CD4-positive, alpha-beta memory T cell (primary cell): ENCODE measurements at regions of chr5 and their contacts with region 1.

Region 1: DNA sequence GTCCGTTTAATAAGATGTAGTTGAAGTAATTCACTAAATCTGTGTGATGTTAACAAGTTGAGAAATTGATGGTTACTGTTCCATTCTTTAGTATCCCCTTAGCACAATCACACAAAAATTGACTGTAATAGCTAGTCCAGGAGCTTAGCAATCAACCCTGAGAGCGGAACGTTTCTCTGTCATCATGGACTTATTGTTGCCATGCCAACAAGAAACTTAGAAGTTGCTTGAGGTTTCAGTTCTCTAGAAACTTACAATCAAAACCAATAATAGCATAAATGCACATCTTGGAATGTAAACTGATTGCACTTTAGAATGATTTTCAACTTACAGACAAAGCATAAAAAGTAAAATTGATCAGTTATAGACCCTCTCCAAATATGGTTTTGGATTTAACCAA is 125.4 kb upstream of the ANKH start:
- DNase-seq: no peak
- H3K4me3 ChIP-seq: no peak overlapping the region
- H3K4me3 Mint-ChIP-seq: no peak overlapping the region
- H3K27ac ChIP-seq: no peak overlapping the region
- H3K27ac Mint-ChIP-seq: no peak overlapping the region
- H3K4me1 ChIP-seq: peaks cover 7% of the 10 kb centered on the region
- H3K4me1 Mint-ChIP-seq: peaks cover 5 to 15% (median 9%) of the 10 kb centered on the region in 4 donors
- H3K27me3 ChIP-seq: no peaks in the 10 kb centered on the region
- H3K27me3 Mint-ChIP-seq: peaks cover 3 to 7% of the 10 kb centered on the region in 2 donors

Region 2: GRCh38 chr5:14595189-14595588 is 401.8 kb before region 1 on chr5:
- CTCF ChIA-PET with region 1: no interaction called
- POLR2A ChIA-PET with region 1: no interaction called
- intact Hi-C with region 1: loop called (anchors 10 kb)
- DNase-seq: peak; percentile 40 to 56 (median 49)
- H3K4me3 ChIP-seq: peak overlapping the region; percentile 16 to 34
- H3K4me3 Mint-ChIP-seq: peak overlapping the region; percentile 78 to 88 (median 84)
- H3K27ac ChIP-seq: peak overlapping the region; percentile 55
- H3K27ac Mint-ChIP-seq: peak overlapping the region; percentile 84 to 98 (median 96)
- H3K4me1 ChIP-seq: peaks cover 86% of the 10 kb centered on the region
- H3K4me1 Mint-ChIP-seq: peaks cover 68 to 90% (median 79%) of the 10 kb centered on the region in 4 donors
- H3K27me3 ChIP-seq: no peaks in the 10 kb centered on the region
- H3K27me3 Mint-ChIP-seq: no peaks in the 10 kb centered on the region

Region 3: DNA sequence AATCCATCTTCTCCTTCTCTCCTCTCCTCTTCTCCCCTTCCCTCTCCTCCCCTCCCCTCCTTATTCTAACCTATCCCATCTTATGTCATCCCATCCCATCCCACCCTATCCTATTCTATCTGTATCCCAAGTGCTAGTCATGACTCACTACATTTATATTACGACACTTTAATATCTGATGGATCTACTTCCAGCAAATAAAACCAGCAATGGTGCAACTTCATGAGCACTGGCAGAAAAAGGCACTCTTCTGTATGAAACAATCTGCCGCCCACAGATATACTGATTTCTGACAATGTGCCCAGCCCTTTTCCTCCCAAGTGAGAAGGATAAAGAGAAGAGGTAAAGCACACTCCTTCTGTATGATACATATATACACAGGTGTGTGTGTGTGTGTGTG is 38.8 kb before region 1 on chr5:
- CTCF ChIA-PET with region 1: interaction called, 76 read pairs
- POLR2A ChIA-PET with region 1: no interaction called
- intact Hi-C with region 1: no loop called
- DNase-seq: no peak
- H3K4me3 ChIP-seq: no peak overlapping the region
- H3K4me3 Mint-ChIP-seq: no peak overlapping the region
- H3K27ac ChIP-seq: no peak overlapping the region
- H3K27ac Mint-ChIP-seq: no peak overlapping the region
- H3K4me1 ChIP-seq: no peaks in the 10 kb centered on the region
- H3K4me1 Mint-ChIP-seq: peaks cover 0 to 2% (median 0%) of the 10 kb centered on the region in 4 donors
- H3K27me3 ChIP-seq: no peaks in the 10 kb centered on the region
- H3K27me3 Mint-ChIP-seq: no peaks in the 10 kb centered on the region

Region 4: GRCh38 chr5:14983666-14984441 is 13.1 kb before region 1 on chr5:
- CTCF ChIA-PET with region 1: interaction called, 14 read pairs
- POLR2A ChIA-PET with region 1: interaction called, 4 read pairs
- intact Hi-C with region 1: no loop called
- DNase-seq: peak in 3 of 5 donors; percentile 8 to 28 (median 23)
- H3K4me3 ChIP-seq: no peak overlapping the region
- H3K4me3 Mint-ChIP-seq: peak overlapping the region in 2 of 8 donors; percentile 27 to 30
- H3K27ac ChIP-seq: no peak overlapping the region
- H3K27ac Mint-ChIP-seq: peak overlapping the region in 4 of 7 donors; percentile 16 to 45 (median 28)
- H3K4me1 ChIP-seq: peaks cover 21% of the 10 kb centered on the region
- H3K4me1 Mint-ChIP-seq: peaks cover 16 to 22% (median 20%) of the 10 kb centered on the region in 4 donors
- H3K27me3 ChIP-seq: no peaks in the 10 kb centered on the region
- H3K27me3 Mint-ChIP-seq: peaks cover 0 to 1% of the 10 kb centered on the region in 2 donors

Region 5: DNA sequence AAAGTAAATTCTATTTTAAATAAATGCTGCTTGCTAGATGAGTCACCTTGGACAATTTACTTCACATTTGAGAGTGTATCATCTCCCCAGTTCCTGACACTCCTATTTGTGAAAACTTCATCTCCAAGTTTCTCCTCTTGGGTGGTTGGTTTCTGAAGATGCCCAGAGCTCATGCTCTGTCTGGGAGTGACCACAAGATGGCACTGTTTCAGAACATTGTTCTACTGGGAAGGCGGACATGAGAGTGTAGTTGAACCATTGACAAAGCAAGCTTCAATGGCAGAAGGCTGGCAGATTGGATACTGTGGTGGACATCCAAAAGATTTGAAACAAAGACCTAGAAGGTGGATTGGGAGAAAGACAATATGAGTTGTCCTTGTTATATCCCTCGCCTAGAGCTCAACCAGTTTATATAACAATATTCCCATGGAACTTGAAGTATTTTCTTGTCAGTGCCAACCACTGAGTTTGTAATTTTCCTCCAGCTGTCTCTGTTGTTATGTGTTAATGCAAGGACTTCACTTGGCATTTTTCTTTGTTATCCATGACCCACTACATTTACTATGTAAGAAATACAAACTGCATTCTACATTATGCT is 108.9 kb after region 1 on chr5:
- CTCF ChIA-PET with region 1: no interaction called
- POLR2A ChIA-PET with region 1: no interaction called
- intact Hi-C with region 1: no loop called
- DNase-seq: peak in 3 of 5 donors; percentile 3 to 11 (median 4)
- H3K4me3 ChIP-seq: no peak overlapping the region
- H3K4me3 Mint-ChIP-seq: no peak overlapping the region
- H3K27ac ChIP-seq: no peak overlapping the region
- H3K27ac Mint-ChIP-seq: no peak overlapping the region
- H3K4me1 ChIP-seq: no peaks in the 10 kb centered on the region
- H3K4me1 Mint-ChIP-seq: peaks cover 1 to 6% (median 3%) of the 10 kb centered on the region in 4 donors
- H3K27me3 ChIP-seq: no peaks in the 10 kb centered on the region
- H3K27me3 Mint-ChIP-seq: peaks cover 0 to 2% of the 10 kb centered on the region in 2 donors